ENCODE measurements at regions of chr5 and their contacts with region 1.

Region 1: GRCh38 chr5:113330533-113331208 is 104.1 kb downstream of the TSSK1B start:
- DNase-seq: peak; percentile 21
- H3K4me3 ChIP-seq: no peak overlapping the region
- H3K27ac ChIP-seq: no peak overlapping the region
- H3K27me3 ChIP-seq: no peaks in the 10 kb centered on the region
- CTCF ChIP-seq: peak; percentile 44

Region 2: DNA sequence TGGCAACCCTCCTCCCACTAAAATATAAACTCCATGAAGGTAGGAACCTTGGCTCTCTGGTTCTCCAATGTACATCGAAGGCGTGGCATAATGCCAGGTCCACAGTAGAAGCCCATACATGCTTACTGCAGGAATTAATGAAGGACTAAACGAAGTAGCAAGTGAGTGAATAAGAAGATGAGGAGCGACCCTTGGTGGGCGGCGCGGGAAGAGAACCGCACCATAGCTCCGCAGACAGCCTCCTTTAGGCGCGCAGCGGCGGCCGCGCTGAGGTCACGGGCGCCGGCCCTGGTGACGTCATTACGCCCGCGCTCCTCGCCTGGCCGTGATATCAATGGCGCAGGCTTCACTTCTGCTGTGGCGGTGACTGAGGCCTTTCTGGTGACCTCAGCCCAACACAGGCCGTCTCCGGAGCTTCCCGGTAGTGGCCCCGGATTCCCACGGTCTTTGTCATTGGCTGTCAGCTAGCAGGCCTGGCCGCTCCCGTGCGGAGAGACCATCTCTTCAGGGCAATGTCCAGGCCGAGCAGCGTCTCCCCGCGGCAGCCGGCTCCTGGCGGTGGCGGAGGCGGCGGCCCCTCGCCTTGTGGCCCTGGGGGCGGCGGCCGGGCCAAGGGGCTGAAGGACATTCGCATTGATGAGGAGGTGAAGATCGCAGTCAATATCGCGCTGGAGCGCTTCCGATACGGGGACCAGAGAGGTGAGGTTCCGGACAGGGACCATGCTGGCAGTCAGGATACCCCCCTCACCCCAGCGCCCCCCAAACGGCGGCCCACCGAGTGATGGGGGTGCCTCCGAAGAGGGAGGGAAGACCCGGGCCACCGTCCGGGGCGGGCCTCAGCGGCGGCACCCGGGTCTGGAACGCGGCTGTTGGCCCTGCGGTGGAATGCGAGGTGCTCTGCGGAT is 183.0 kb after region 1 on chr5 and contains the start of gene YTHDC2:
- in situ Hi-C with region 1: loop called (anchors 25 kb)
- DNase-seq: peak; percentile 88
- H3K4me3 ChIP-seq: peak within 1 kb of the TSS; percentile 83
- H3K27ac ChIP-seq: peak within 1 kb of the TSS; percentile 79
- H3K27me3 ChIP-seq: no peaks in the 10 kb centered on the region
- CTCF ChIP-seq: peak; percentile 47